ENCODE measurements at regions of chr1 and their contacts with region 1.

Region 1: GRCh38 chr1:78004719-78005447 is at the start of gene DNAJB4:
- DNase-seq: peak in 33 of 35 experiments; percentile 29 to 92 (median 65)
- ATAC-seq: peak; percentile 97 to 100 (median 100)
- H3K4me3 ChIP-seq: peak within 1 kb of the TSS; percentile 55 to 60
- H3K4me3 Mint-ChIP-seq: peak within 1 kb of the TSS; percentile 87 to 88 (median 87)
- H3K27ac ChIP-seq: peak within 1 kb of the TSS; percentile 97
- H3K27ac Mint-ChIP-seq: peak within 1 kb of the TSS; percentile 97 to 99
- H3K4me1 ChIP-seq: peaks cover 4 to 13% of the 10 kb centered on the region in 2 experiments
- H3K4me1 Mint-ChIP-seq: peaks cover 45 to 49% (median 48%) of the 10 kb centered on the region in 3 donors
- H3K27me3 ChIP-seq: no peaks in the 10 kb centered on the region
- H3K27me3 Mint-ChIP-seq: no peaks in the 10 kb centered on the region
- total RNA-seq, gene DNAJB4: 10.0 to 19.6 (median 12.2) TPM

Region 2: GRCh38 chr1:77779529-77780281 is 225.2 kb before region 1 on chr1 and contains the start of gene MIGA1:
- CTCF ChIA-PET with region 1: interaction called, 4 to 7 read pairs
- POLR2A ChIA-PET with region 1: interaction called, 7 to 13 read pairs
- DNase-seq: peak; percentile 69 to 96 (median 86)
- ATAC-seq: peak; percentile 97 to 98 (median 98)
- H3K4me3 ChIP-seq: peak within 1 kb of the TSS; percentile 76 to 90
- H3K4me3 Mint-ChIP-seq: peak within 1 kb of the TSS; percentile 93 to 98 (median 94)
- H3K27ac ChIP-seq: peak within 1 kb of the TSS; percentile 52
- H3K27ac Mint-ChIP-seq: peak within 1 kb of the TSS; percentile 82 to 85
- H3K4me1 ChIP-seq: peaks cover 8 to 16% of the 10 kb centered on the region in 2 experiments
- H3K4me1 Mint-ChIP-seq: peaks cover 43 to 46% (median 43%) of the 10 kb centered on the region in 3 donors
- H3K27me3 ChIP-seq: peaks cover 0 to under 1% of the 10 kb centered on the region in 2 experiments
- H3K27me3 Mint-ChIP-seq: no peaks in the 10 kb centered on the region
- total RNA-seq, gene MIGA1: 14.9 to 17.7 (median 16.1) TPM

Region 3: GRCh38 chr1:77978969-77979876 is 25.7 kb before region 1 on chr1 and contains the start of gene FUBP1:
- CTCF ChIA-PET with region 1: interaction called, 11 to 74 read pairs
- POLR2A ChIA-PET with region 1: interaction called, 66 to 183 read pairs
- DNase-seq: peak; percentile 87 to 99 (median 95)
- ATAC-seq: peak; percentile 81 to 85 (median 82)
- H3K4me3 ChIP-seq: peak within 1 kb of the TSS; percentile 92 to 93
- H3K4me3 Mint-ChIP-seq: no peak within 1 kb of the TSS
- H3K27ac ChIP-seq: peak within 1 kb of the TSS; percentile 100
- H3K27ac Mint-ChIP-seq: no peak within 1 kb of the TSS
- H3K4me1 ChIP-seq: peaks cover 29 to 36% of the 10 kb centered on the region in 2 experiments
- H3K4me1 Mint-ChIP-seq: peaks cover 49 to 51% (median 51%) of the 10 kb centered on the region in 3 donors
- H3K27me3 ChIP-seq: no peaks in the 10 kb centered on the region
- H3K27me3 Mint-ChIP-seq: no peaks in the 10 kb centered on the region
- total RNA-seq, gene FUBP1: 180 to 224 (median 194) TPM

Region 4: GRCh38 chr1:78015148-78015547 is 10.3 kb after region 1 on chr1:
- CTCF ChIA-PET with region 1: interaction called in 1 of 2 experiments, 9 read pairs
- POLR2A ChIA-PET with region 1: interaction called, 4 to 10 read pairs
- DNase-seq: no peak
- ATAC-seq: no peak
- H3K4me3 ChIP-seq: no peak overlapping the region
- H3K4me3 Mint-ChIP-seq: no peak overlapping the region
- H3K27ac ChIP-seq: no peak overlapping the region
- H3K27ac Mint-ChIP-seq: no peak overlapping the region
- H3K4me1 ChIP-seq: no peaks in the 10 kb centered on the region
- H3K4me1 Mint-ChIP-seq: peaks cover 6 to 10% (median 10%) of the 10 kb centered on the region in 3 donors
- H3K27me3 ChIP-seq: no peaks in the 10 kb centered on the region
- H3K27me3 Mint-ChIP-seq: no peaks in the 10 kb centered on the region